ENCODE measurements at regions of chr19 and their contacts with region 1.

Region 1: DNA sequence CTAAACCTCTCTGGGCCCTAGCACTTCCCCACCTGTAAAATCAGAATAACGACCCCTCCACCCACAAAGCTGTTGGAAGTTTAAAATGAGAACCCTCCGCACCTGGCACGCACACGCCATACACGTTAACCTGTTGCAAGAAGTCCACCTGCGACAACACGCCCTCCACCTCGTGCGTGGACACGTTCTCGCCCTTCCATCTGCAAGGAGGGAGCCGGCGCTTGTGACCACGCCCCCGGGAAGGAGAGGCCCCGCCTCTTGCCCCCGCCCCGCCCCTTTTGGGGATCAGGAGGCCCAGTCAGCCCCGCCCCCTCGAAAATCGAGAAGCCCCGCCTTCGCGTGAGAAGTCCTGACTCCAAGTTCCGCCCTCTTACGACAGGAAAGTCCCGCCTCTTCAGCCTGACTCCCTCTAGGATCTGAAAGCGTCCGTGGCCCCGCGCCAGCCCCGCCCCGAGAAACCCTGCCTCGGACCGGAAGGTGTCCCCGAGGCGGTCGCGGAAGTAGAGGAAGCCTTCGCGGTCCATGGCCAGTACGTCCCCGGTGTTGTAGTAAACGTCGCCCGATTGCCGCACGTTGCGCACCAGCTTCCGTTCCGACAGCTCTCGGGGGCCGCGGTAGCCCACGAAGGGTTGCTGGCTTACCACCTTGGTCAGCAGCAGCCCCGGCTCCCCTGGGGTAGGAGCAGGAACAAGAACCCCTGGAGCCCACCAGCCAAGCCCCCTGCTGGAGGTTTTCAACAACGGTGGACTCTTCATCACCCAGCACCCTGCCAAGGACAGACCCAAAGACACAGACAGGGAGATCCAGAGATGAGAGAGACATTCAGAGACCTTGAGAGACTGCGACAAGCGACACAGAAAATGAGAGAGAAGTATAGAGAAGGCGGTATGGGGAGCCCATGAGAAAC is 12.5 kb downstream of the SLC27A5 start:
- DNase-seq: peak; percentile 89
- ATAC-seq: peak; percentile 92
- H3K4me3 Mint-ChIP-seq: peak overlapping the region; percentile 92
- H3K27ac Mint-ChIP-seq: peak overlapping the region; percentile 90
- H3K4me1 Mint-ChIP-seq: peaks cover 24% of the 10 kb centered on the region
- H3K27me3 Mint-ChIP-seq: no peaks in the 10 kb centered on the region
- CTCF ChIP-seq: no peak

Region 2: GRCh38 chr19:58346961-58347931 is 152.0 kb before region 1 on chr19:
- CTCF ChIA-PET with region 1: no interaction called
- POLR2A ChIA-PET with region 1: interaction called, 12 read pairs
- intact Hi-C with region 1: no loop called
- DNase-seq: peak; percentile 84
- ATAC-seq: peak; percentile 93
- H3K4me3 Mint-ChIP-seq: peak overlapping the region; percentile 93
- H3K27ac Mint-ChIP-seq: peak overlapping the region; percentile 76
- H3K4me1 Mint-ChIP-seq: peaks cover 30% of the 10 kb centered on the region
- H3K27me3 Mint-ChIP-seq: no peaks in the 10 kb centered on the region
- CTCF ChIP-seq: no peak

Region 3: DNA sequence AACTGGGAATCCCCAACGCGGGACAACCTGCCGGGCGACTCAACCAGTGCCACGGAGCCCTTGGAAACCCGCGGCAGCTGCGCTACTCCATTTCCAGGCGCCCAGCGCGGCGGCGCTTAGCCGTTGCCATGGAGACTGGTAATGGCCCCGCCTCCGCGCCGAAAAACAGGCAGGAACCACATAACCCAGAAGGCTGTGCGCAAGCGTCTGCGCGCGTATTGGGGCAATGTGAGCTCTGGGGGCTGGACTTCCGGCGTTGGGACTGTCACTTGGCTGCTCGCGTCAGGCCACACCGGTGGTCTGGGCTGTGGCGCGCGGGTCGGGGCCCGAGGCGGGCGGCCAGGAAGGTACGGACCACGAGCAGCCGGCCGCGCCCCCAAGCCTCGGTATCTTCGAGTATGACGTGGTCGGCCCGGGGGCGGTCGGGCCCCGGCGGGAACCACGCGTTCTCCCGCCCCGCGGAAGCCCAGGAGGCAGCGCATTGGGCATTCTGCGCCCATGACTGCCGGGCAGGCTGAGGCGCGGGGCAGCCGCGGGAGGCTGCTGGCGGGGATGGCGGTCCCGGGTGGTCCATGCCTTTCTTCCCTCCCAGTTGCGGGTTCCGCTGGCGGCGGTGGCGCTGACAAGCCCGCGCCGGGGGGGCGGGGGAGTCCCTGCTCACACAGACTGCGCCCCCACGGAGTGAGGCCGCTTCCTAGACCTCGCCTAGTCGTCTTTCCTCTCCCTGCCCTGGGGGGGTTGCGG is 47.7 kb before region 1 on chr19 and contains the start of gene ZNF324B:
- CTCF ChIA-PET with region 1: no interaction called
- POLR2A ChIA-PET with region 1: interaction called, 5 read pairs
- intact Hi-C with region 1: loop called (anchors 1 kb)
- DNase-seq: peak; percentile 94
- ATAC-seq: peak; percentile 98
- H3K4me3 Mint-ChIP-seq: peak within 1 kb of the TSS; percentile 86
- H3K27ac Mint-ChIP-seq: peak within 1 kb of the TSS; percentile 79
- H3K4me1 Mint-ChIP-seq: peaks cover 16% of the 10 kb centered on the region
- H3K27me3 Mint-ChIP-seq: peaks cover 15% of the 10 kb centered on the region
- CTCF ChIP-seq: no peak
- total RNA-seq, gene ZNF324B: 11.1 and 11.7 TPM in 2 replicates

Region 4: DNA sequence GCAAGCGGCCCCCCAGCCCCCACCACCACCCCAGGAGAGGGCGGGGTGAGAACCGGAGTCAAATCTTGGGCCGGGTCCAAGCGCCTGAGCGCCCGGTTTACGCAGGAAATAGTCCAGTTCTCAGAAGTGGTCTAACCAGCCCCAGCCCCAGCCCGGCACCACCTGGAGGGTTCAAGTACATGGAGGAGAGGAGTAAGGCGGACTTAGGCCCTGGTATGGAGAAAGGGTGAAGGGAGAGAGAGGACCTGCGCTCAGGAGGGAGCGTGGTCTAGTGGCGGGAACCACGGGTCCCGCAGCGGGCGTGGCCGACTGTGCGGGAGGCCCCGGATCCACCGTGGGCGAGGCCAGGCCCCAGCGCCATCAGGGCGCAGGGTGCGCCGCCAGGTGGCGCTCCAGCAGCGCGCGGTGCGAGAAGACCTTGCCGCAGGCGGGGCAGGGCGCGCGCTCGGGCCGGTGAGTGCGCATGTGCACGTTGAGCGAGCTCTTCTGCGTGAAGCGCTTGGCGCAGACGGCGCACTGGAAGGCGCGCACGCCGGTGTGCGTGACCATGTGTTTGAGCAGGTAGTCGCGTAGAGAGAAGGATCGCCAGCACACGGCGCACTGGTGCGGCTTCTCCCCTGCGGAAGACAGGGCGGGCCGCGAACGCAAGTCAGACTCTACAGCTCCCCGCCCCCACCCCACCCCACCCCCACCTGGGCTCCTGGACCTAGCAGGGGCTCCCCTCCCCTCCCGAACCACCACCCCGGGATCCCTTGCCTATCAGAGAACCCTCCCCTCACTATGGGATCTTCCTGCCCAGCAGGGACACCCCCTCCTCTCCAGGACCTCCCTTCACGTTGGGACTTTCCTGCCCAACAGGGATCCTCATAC is 14.7 kb after region 1 on chr19:
- CTCF ChIA-PET with region 1: interaction called, 10 read pairs
- POLR2A ChIA-PET with region 1: interaction called, 42 read pairs
- intact Hi-C with region 1: loop called (anchors 1 kb)
- DNase-seq: peak; percentile 83
- ATAC-seq: peak; percentile 89
- H3K4me3 Mint-ChIP-seq: peak overlapping the region; percentile 73
- H3K27ac Mint-ChIP-seq: peak overlapping the region; percentile 24
- H3K4me1 Mint-ChIP-seq: peaks cover 32% of the 10 kb centered on the region
- H3K27me3 Mint-ChIP-seq: no peaks in the 10 kb centered on the region
- CTCF ChIP-seq: peak; percentile 24